ENCODE measurements at regions of chr11 and their contacts with region 1.

Region 1: DNA sequence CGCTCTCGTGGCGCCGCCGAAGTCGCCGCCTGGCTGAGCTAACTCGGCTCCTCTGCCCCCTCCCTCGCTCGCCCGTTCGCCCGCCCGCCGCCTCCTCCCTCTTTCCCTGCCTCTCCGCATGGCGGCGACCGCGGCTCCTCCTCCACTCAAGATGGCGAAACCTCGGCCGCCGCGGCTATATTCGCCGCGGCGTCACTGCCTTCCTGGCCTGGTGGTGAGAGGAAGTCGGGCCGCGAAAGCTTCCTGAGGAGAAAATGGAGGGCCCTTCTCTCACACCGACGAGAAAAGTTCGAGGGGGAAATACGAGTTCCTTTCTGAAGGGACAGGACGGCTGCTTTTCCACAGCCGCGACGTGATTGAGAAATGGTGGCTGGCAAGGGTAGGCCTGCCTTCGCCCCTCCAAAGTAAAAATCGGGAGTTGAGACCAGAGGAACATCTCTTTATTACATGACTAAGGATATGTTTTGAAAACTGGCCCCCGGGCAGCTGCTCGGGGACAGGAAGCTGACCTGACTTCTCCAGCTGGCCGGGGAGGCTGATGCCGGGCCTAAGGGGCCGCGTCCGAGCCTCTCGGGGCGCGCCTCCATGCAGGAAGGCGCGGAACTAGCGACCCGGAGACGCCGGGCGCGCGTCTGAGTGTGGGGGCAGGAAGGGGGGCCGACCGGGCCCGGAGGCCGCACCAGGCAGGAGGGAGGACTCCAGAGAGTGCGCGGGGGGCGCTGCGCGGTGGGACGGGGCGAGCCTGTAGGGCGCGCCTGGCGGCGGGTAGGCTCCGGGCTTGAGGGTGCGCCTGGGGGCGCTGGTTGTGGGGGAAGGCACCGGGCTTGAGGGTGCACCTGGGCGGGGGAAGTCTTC is at the start of gene DDX6:
- DNase-seq: peak; percentile 19
- ATAC-seq: peak; percentile 69
- H3K4me3 ChIP-seq: peak within 1 kb of the TSS; percentile 81
- H3K27ac ChIP-seq: peak within 1 kb of the TSS; percentile 100
- H3K4me1 ChIP-seq: no peaks in the 10 kb centered on the region; the same call in 1 of the 2 replicates
- H3K27me3 ChIP-seq: no peaks in the 10 kb centered on the region
- CTCF ChIP-seq: peak; percentile 21 to 41 (median 32); a peak in 3 of 6 replicates
- EP300 ChIP-seq: no peak
- POLR2A ChIP-seq: peak; percentile 82
- RAD21 ChIP-seq: peak; percentile 14; the same call in 1 of the 2 replicates
- polyA plus RNA-seq, gene DDX6: 6.6 to 20.0 TPM

Region 2: GRCh38 chr11:118699506-118700220 is 91.7 kb before region 1 on chr11:
- CTCF ChIA-PET with region 1: interaction called, 68 read pairs
- POLR2A ChIA-PET with region 1: interaction called, 4 read pairs
- RAD21 ChIA-PET with region 1: interaction called, 26 read pairs
- SMC1A ChIA-PET with region 1: interaction called, 6 read pairs
- in situ Hi-C with region 1: no loop called
- intact Hi-C with region 1: loop called (anchors 5 kb)
- DNase-seq: no peak
- ATAC-seq: no peak
- H3K4me3 ChIP-seq: no peak overlapping the region
- H3K27ac ChIP-seq: no peak overlapping the region
- H3K4me1 ChIP-seq: peaks cover 32% of the 10 kb centered on the region
- H3K27me3 ChIP-seq: no peaks in the 10 kb centered on the region
- CTCF ChIP-seq: no peak
- EP300 ChIP-seq: no peak
- POLR2A ChIP-seq: no peak
- RAD21 ChIP-seq: no peak

Region 3: DNA sequence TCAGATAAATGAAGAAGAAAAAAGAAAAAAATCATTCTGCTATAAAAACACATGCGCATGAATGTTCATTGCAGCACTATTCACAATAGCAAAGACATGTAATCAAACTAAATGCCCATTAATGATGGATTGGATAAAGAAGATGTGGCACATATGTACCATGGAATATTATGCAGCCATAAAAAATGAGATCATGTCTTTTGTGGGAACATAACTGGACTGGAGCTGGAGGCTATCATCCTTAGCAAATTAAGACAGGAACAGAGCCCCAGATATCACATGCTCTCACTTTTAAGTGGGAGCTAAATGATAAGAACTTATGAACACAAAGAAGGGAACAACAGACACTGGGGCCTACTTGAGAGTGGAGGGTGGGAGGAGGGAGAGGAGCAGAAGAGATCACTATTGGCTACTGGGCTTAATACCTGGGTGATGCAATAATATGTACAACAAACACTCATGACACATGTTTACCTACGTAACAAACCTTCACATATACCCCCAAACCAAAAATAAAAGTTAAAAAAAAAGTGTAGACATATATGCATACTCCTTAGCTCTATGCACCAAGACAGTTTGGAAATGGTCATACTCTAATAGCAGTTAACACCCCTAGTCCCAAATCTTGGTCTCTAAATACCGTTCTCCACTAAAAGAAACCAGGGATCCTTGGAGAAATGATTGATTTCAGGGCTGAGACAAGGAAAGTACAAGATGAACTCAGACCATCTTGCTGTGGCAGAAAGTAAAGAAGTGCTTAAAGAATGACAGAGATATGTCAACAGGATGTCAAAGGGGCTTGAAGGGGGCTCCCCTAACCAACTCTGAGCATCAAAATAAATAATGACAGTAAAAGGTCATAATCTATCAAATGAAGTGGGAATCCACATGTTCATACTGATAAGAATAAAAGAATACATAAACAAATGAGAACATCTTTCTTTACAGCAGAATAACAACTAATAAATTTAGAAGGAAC is 16.8 kb after region 1 on chr11:
- CTCF ChIA-PET with region 1: interaction called, 12 read pairs
- POLR2A ChIA-PET with region 1: interaction called, 13 read pairs
- RAD21 ChIA-PET with region 1: interaction called, 7 read pairs
- SMC1A ChIA-PET with region 1: interaction called, 8 read pairs
- in situ Hi-C with region 1: no loop called
- intact Hi-C with region 1: no loop called
- DNase-seq: no peak
- ATAC-seq: no peak
- H3K4me3 ChIP-seq: no peak overlapping the region
- H3K27ac ChIP-seq: no peak overlapping the region
- H3K4me1 ChIP-seq: no peaks in the 10 kb centered on the region
- H3K27me3 ChIP-seq: no peaks in the 10 kb centered on the region
- CTCF ChIP-seq: no peak
- EP300 ChIP-seq: no peak
- POLR2A ChIP-seq: no peak
- RAD21 ChIP-seq: no peak

Region 4: DNA sequence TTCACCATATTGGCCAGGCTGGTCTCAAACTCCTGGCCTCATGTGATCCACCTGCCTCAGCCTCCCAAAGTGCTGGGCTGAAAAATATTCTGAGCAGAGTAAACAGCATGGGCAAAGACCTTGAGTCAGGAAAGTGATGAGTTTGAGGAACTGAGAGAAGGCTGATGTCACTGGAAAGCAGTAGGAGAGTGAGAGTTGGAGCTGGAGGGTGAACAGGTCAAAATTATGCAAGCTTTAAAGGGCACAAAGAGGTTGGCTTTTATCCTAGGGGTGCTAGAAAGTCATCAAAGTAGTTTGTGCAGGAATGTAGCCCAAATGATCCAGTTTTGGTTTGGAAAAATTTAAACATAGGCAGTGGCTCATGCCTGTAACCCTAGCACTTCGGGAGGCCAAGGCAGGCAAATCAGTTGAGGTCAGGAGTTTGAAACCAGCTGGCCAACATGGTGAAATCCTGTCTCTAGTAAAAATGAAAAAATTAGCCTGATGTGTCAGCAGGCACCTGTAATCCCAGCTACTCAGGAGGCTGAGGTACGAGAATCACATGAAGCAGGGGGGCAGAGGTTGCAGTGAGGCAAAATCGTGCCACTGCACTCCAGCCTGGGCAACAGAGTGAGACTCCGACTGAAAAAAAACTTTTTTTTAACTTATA is 47.7 kb after region 1 on chr11:
- CTCF ChIA-PET with region 1: interaction called, 5 read pairs
- POLR2A ChIA-PET with region 1: interaction called, 7 read pairs
- RAD21 ChIA-PET with region 1: interaction called, 12 read pairs
- SMC1A ChIA-PET with region 1: interaction called, 11 read pairs
- in situ Hi-C with region 1: no loop called
- intact Hi-C with region 1: loop called (anchors 2 kb)
- DNase-seq: peak; percentile 85
- ATAC-seq: peak; percentile 87
- H3K4me3 ChIP-seq: no peak overlapping the region; the same call in 1 of the 2 replicates
- H3K27ac ChIP-seq: peak overlapping the region; percentile 24; the same call in 1 of the 2 replicates
- H3K4me1 ChIP-seq: peaks cover 26% of the 10 kb centered on the region
- H3K27me3 ChIP-seq: no peaks in the 10 kb centered on the region
- CTCF ChIP-seq: no peak
- EP300 ChIP-seq: peak in 1 of 2 experiments; percentile 77; a peak in 2 of 4 replicates
- POLR2A ChIP-seq: no peak
- RAD21 ChIP-seq: peak; percentile 22; the same call in 1 of the 2 replicates

Region 5: GRCh38 chr11:118878163-118878563 is 86.8 kb after region 1 on chr11:
- CTCF ChIA-PET with region 1: interaction called, 19 read pairs
- POLR2A ChIA-PET with region 1: interaction called, 22 read pairs
- RAD21 ChIA-PET with region 1: interaction called, 53 read pairs
- SMC1A ChIA-PET with region 1: interaction called, 14 read pairs
- in situ Hi-C with region 1: no loop called
- intact Hi-C with region 1: loop called (anchors 5 kb)
- DNase-seq: no peak
- ATAC-seq: no peak
- H3K4me3 ChIP-seq: no peak overlapping the region
- H3K27ac ChIP-seq: no peak overlapping the region
- H3K4me1 ChIP-seq: peaks cover 26% of the 10 kb centered on the region
- H3K27me3 ChIP-seq: peaks cover 4 to 7% of the 10 kb centered on the region in 2 experiments
- CTCF ChIP-seq: no peak
- EP300 ChIP-seq: no peak
- POLR2A ChIP-seq: no peak
- RAD21 ChIP-seq: no peak

Region 6: DNA sequence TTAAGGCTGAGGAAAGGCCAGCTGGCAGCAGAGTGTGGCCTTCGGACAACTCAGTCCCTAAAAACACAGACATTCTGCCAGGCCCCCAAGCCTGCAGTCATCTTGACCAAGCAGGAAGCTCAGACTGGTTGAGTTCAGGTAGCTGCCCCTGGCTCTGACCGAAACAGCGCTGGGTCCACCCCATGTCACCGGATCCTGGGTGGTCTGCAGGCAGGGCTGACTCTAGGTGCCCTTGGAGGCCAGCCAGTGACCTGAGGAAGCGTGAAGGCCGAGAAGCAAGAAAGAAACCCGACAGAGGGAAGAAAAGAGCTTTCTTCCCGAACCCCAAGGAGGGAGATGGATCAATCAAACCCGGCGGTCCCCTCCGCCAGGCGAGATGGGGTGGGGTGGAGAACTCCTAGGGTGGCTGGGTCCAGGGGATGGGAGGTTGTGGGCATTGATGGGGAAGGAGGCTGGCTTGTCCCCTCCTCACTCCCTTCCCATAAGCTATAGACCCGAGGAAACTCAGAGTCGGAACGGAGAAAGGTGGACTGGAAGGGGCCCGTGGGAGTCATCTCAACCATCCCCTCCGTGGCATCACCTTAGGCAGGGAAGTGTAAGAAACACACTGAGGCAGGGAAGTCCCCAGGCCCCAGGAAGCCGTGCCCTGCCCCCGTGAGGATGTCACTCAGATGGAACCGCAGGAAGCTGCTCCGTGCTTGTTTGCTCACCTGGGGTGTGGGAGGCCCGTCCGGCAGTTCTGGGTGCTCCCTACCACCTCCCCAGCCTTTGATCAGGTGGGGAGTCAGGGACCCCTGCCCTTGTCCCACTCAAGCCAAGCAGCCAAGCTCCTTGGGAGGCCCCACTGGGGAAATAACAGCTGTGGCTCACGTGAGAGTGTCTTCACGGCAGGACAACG is 104.1 kb after region 1 on chr11:
- CTCF ChIA-PET with region 1: interaction called, 37 read pairs
- POLR2A ChIA-PET with region 1: interaction called, 7 read pairs
- RAD21 ChIA-PET with region 1: interaction called, 9 read pairs
- SMC1A ChIA-PET with region 1: interaction called, 21 read pairs
- in situ Hi-C with region 1: no loop called
- intact Hi-C with region 1: no loop called
- DNase-seq: peak; percentile 47
- ATAC-seq: peak; percentile 85
- H3K4me3 ChIP-seq: no peak overlapping the region
- H3K27ac ChIP-seq: no peak overlapping the region; the same call in 1 of the 2 replicates
- H3K4me1 ChIP-seq: peaks cover 44% of the 10 kb centered on the region
- H3K27me3 ChIP-seq: no peaks in the 10 kb centered on the region
- CTCF ChIP-seq: peak in 1 of 3 experiments; percentile 34; a peak in 2 of 6 replicates
- EP300 ChIP-seq: 0 out of 4 replicates have a peak, but pooled peaks of 1 of the 2 experiments have one; percentile 18
- POLR2A ChIP-seq: peak; percentile 34; the same call in 1 of the 2 replicates
- RAD21 ChIP-seq: peak; percentile 20; the same call in 1 of the 2 replicates

Region 7: DNA sequence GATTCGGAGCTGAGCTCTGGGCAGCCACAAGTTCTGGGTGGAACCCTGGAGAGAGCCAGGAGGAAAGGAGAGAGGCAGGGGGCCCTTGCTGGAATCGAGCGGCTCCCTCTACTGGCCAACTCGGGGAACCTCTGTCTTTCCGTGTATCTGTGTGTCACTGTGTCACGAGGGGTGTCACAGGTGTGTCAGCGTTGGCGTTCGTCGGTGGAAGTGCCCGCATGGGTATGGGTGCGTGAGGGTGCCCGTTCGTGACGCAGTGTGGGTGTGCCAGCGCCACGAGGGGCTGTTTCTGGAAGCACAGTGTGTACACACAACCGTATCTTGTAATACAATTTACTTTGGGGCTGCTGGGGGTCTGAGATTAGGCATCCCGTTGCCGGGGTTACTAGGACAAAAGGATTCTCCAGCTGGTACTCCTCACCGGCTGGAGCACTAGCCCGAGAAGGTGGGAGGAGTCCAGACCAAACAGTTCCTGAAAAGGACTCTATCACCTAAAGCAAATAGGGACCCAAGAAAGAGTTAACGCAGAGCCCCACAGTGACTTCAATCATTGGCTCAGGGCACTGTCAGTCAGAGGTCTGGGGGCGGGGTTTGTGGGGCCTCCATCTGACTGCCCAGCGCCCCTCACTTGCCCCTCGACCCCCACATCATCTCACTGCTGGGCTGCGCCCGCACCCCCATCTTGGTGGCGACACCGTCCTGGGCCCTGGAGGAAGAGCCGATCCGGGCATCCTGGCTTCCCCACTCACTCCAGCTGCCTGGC is 137.0 kb after region 1 on chr11:
- CTCF ChIA-PET with region 1: interaction called, 11 read pairs
- POLR2A ChIA-PET with region 1: interaction called, 10 read pairs
- RAD21 ChIA-PET with region 1: interaction called, 10 read pairs
- SMC1A ChIA-PET with region 1: interaction called, 8 read pairs
- in situ Hi-C with region 1: no loop called
- intact Hi-C with region 1: loop called (anchors 2 kb)
- DNase-seq: peak; percentile 67
- ATAC-seq: peak; percentile 67
- H3K4me3 ChIP-seq: peak overlapping the region; percentile 97
- H3K27ac ChIP-seq: peak overlapping the region; percentile 67
- H3K4me1 ChIP-seq: peaks cover 35% of the 10 kb centered on the region
- H3K27me3 ChIP-seq: no peaks in the 10 kb centered on the region
- CTCF ChIP-seq: peak; percentile 93 to 97 (median 96)
- EP300 ChIP-seq: peak; percentile 15 to 60; a peak in 1 of 4 replicates
- POLR2A ChIP-seq: 0 out of 2 replicates have a peak, but pooled peaks have one; percentile 49
- RAD21 ChIP-seq: peak; percentile 63